ENCODE measurements at regions of chr5 and their contacts with region 1.

Region 1: DNA sequence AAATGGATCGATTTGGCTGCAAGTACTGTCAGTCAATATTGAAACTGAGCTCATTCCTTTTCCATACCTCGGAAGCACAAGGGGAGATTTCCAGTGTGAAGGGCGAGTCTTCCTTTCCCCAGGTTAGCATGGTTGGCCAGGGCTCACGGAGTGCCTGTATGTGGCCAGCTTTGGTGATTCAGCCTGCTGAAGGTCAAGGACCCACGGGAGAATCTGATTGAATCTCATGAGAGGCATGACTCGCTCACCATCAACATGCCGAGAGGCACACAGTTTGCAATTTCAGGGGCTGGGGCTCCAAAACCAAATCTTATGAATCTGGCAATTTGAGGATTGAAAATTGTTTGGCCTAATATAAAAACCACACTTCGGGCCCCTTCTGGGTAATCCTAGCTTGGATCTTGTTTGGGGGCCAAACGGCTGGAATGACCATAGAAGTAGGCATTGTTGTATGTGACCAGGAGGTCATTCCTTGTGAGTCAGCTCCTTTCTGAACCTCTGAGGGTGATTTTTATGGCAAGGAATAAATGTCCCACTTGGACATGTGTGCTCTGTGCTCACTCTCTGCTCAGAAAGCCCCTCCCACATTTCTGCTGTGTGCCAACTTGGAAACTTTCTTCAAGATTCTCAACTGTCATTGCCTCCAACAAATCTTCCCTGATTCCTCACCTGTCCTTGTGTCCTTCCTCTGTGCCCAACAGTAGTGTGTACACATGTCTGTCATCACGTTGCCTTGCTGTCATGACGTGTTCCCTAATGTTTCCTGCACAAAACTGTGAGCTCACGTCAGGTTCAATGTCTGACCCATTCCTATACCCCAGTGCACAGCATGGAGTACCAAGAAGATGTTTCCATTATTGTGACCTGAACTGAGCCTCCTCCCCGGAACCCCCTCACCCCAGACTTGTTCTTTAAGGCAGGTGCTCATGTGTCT is 70.0 kb downstream of the DOCK2 start:
- DNase-seq: no peak
- ATAC-seq: peak in 2 of 8 donors; percentile 17 to 76
- H3K4me3 ChIP-seq: no peak overlapping the region
- H3K27ac ChIP-seq: no peak overlapping the region
- H3K4me1 ChIP-seq: peaks cover 0 to 8% (median 0%) of the 10 kb centered on the region in 9 donors
- H3K27me3 ChIP-seq: no peaks in the 10 kb centered on the region
- CTCF ChIP-seq: no peak

Region 2: DNA sequence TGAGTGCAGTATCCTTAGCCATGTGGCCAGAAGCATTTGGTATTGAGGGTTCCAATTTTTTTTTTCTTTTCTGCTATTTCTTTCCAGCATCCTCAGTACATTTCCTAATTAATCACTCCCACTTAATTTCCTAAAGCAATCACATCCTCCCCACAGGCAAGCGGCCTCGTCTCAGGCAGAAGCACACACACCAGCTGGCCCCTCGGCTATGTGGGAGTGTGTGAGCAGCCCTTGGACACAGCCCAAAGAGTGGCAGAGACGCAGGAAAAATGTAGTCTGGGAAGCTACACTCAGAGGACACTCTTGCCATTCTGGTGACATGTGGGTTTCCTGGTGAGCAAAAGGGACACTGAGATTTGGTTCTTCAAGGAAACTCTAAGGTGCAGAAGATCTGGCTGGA is 426.7 kb before region 1 on chr5:
- intact Hi-C with region 1: no loop called
- DNase-seq: no peak
- ATAC-seq: peak in 3 of 8 donors; percentile 42 to 65 (median 42)
- H3K4me3 ChIP-seq: no peak overlapping the region
- H3K27ac ChIP-seq: no peak overlapping the region
- H3K4me1 ChIP-seq: peaks cover 0 to 4% (median 0%) of the 10 kb centered on the region in 9 donors
- H3K27me3 ChIP-seq: peaks cover 0 to 11% (median 0%) of the 10 kb centered on the region in 7 donors
- CTCF ChIP-seq: no peak

Region 3: DNA sequence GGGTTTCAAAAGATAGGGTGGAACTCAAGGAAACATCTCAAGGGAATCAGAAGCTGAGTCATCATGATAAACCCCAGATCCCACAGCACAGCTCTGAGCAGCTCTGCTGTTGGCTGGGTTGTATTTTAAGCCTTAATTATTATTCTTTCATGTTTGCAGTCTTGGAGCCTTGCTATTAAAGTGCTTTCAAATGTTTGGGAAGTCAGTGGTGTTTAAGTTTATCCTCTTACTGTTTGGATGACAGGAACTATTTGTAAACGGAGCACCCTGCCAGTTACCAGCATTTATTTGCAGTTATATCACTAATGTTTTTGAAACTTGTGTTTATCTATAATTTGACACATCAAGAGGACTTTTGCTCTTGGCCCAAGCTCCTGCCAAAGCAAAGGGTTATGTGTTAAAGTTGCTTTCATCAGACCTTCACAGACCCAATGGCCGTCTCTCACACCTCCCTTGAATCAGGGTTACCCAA is 264.6 kb before region 1 on chr5:
- intact Hi-C with region 1: no loop called
- DNase-seq: no peak
- ATAC-seq: peak in 2 of 8 donors; percentile 38 to 55
- H3K4me3 ChIP-seq: no peak overlapping the region
- H3K27ac ChIP-seq: peak overlapping the region in 1 of 10 donors; percentile 38
- H3K4me1 ChIP-seq: peaks cover 0 to 24% (median 12%) of the 10 kb centered on the region in 9 donors
- H3K27me3 ChIP-seq: no peaks in the 10 kb centered on the region
- CTCF ChIP-seq: no peak

Region 4: DNA sequence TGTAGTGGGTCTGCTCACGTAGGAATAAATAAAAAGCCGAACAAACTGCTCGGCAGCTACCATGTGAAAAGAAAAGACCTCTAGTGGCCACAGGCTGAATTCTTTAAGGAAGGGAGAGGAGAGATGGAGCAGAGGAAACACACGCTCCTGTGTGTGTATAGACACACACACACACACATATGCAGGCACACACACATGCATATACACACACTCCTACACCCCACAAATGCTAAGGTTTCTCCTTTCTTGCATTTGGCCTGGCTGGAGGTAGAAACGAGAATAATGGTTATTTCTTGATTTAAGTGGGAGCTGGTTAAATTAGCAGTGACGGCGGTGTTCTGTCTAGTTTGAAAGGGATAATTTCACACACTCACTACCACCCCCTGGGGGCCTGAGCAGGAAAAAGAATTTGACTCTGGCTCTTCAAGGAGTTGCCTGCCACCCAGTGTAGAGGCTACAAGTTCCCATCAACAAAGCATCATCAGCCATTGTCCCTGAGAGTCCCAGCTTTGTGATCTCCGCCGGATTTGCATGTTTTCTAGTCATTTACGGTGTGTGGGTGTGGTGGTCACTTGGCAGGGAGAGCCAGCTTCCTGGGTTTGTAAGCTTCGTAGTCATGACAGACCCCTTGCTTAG is 273.5 kb after region 1 on chr5 and contains the start of gene INSYN2B:
- intact Hi-C with region 1: loop called in 7 of 10 experiments (anchors 1 to 5 kb)
- DNase-seq: peak; percentile 36 to 40
- ATAC-seq: peak; percentile 75 to 89 (median 86)
- H3K4me3 ChIP-seq: peak within 1 kb of the TSS in 7 of 10 donors; percentile 12 to 38 (median 25)
- H3K27ac ChIP-seq: peak within 1 kb of the TSS in 1 of 10 donors; percentile 41
- H3K4me1 ChIP-seq: peaks cover 0 to 9% (median 0%) of the 10 kb centered on the region in 9 donors
- H3K27me3 ChIP-seq: peaks cover 0 to 53% (median 23%) of the 10 kb centered on the region in 7 donors
- CTCF ChIP-seq: peak; percentile 11 to 65 (median 57)
- total RNA-seq, gene INSYN2B: 0.13 to 0.87 (median 0.19) TPM in 4 of 10 donors, not detected in the others